Astrocyte of the cerebellum (primary cell): ENCODE measurements at regions of chr10 and their contacts with region 1.

Region 1: GRCh38 chr10:74888962-74889663 is 62.7 kb downstream of the KAT6B start:
- DNase-seq: no peak
- H3K4me3 ChIP-seq: no peak overlapping the region
- CTCF ChIP-seq: no peak

Region 2: DNA sequence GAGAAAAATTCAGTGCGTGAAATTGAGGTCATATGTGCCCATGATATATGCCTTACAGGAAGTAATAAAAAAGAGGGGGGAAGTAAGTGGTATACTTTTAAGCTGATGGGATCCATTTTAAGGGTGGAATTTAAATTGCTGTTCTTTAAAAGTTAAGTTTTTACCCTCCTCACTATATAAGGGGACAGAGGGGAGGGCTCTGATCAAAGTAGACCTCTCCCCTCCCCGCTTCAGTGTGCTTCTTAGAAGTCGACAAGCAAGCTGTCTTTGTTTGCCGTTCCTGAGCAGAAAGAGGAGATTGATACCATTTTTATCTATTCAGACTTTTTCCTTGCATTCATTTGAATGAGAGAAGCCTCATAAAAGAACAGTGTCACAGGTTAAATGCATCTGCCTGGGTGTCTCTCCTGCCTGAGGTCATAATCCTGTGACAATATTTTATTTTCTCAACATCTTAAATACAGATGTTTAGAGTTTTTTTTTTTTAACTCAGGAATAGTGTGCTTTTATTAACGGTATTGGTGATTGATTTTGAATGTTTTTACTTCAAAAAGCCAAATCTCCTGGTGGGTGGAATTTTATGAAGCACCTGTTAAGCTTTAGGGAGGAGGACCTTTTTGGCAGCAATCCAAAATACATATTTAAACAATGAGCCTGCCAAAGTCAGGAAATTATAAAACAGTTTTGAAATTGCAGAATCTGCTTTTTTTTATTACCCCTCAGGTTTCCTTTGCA is 79.0 kb after region 1 on chr10:
- in situ Hi-C with region 1: no loop called
- DNase-seq: no peak
- H3K4me3 ChIP-seq: no peak overlapping the region
- CTCF ChIP-seq: no peak

Region 3: GRCh38 chr10:74981831-74982633 is 92.9 kb after region 1 on chr10:
- in situ Hi-C with region 1: loop called (anchors 5 kb)
- DNase-seq: no peak
- H3K4me3 ChIP-seq: no peak overlapping the region
- CTCF ChIP-seq: no peak

Region 4: DNA sequence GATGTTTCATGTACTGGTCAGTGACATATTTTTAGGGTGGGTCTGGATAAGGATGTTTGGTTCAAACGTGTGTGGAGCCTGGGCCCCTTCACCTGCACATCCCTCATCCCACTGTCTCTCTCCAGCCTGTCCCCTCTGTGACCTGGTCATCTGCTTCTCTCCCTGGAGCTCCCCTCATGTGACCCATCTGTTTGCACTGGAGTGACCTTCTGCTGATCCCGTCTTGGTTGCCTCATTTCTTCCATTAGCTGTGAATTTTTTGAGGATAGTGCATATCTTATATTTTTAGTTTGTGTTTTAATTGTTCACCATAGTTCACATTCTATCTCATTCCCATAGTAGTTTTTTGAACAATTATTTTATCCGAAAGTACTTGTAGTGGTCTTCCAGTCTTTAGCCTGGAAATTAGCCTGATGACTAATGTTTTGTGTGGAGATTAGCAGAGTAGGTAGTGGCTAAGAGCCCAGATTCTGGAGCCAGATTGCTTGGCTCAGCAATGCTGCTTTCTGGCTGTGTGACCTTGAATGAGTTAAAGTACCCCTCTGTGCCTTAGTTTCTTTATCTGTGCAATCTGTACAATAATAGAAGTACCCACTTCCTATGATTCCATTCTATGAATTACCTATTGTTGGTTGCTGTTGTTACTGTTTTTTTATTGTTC is 766.8 kb after region 1 on chr10:
- in situ Hi-C with region 1: no loop called
- DNase-seq: peak; percentile 84
- H3K4me3 ChIP-seq: no peak overlapping the region
- CTCF ChIP-seq: no peak